ENCODE measurements at regions of chr12 and their contacts with region 1.

Region 1: DNA sequence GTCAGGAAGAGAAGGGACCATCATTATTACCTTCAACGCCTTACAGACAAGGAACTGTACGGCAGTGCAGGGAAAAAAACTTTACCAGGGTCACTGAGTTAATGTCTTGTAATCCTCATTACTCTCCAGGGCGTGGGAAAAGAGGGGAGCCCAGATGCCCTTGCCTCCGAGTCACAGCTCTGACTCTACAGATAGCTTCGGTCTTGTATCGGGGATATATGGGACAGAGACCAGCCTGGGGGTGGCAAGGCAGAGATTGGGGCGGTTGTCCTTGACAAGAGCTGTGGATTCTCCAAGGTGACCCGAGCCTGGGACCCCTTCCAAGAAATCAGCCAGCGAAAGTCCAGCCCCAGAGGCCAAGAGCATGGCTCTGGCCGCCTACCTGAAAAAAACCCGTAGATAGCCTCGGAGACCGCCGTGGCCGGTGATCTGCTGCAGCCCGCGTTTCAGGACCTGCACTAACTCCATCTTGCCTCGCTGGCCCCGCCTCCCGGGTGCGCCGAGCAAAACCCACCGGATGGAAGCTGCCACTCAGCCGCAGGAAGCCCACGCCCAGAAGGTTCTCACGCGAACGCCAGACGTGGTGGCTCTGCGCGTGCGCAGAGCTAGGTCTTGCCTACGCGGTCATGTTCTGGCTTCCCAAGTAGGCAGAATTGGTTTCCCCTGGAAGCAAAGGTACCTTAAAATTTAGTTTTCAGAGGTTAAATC is at the start of gene NDUFA12:
- DNase-seq: peak; percentile 96 to 97
- H3K4me3 ChIP-seq: peak within 1 kb of the TSS; percentile 58
- H3K4me3 Mint-ChIP-seq: peak within 1 kb of the TSS; percentile 91
- H3K27ac Mint-ChIP-seq: peak within 1 kb of the TSS; percentile 97
- H3K4me1 ChIP-seq: peaks cover 4% of the 10 kb centered on the region; the same call in 1 of the 2 replicates
- H3K4me1 Mint-ChIP-seq: peaks cover 12% of the 10 kb centered on the region
- H3K27me3 ChIP-seq: no peaks in the 10 kb centered on the region
- H3K27me3 Mint-ChIP-seq: no peaks in the 10 kb centered on the region
- CTCF ChIP-seq: no peak
- total RNA-seq, gene NDUFA12: 122 and 131 TPM in 2 replicates

Region 2: DNA sequence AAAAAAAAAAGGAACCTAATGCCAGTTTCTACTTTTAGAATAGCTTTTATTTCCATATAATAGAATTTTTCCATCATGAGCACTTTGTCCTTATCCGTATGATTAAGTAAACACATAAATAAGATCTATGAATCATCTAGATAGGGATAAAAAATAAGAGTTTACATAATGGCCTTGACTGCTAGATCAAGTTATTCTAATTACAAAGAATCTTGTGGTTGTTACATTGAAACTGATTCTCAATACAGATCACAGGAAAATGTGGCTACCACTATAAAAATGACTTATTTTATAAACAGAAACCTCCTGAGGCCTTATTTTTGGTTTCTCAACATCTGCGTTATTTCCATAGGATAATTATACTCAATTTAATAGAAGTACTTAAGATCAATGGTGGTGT is 34.5 kb after region 1 on chr12:
- CTCF ChIA-PET with region 1: no interaction called
- POLR2A ChIA-PET with region 1: interaction called, 11 read pairs
- intact Hi-C with region 1: no loop called
- DNase-seq: no peak
- H3K4me3 ChIP-seq: no peak overlapping the region
- H3K4me3 Mint-ChIP-seq: no peak overlapping the region
- H3K27ac Mint-ChIP-seq: no peak overlapping the region
- H3K4me1 ChIP-seq: no peaks in the 10 kb centered on the region
- H3K4me1 Mint-ChIP-seq: no peaks in the 10 kb centered on the region
- H3K27me3 ChIP-seq: no peaks in the 10 kb centered on the region
- H3K27me3 Mint-ChIP-seq: no peaks in the 10 kb centered on the region
- CTCF ChIP-seq: no peak

Region 3: GRCh38 chr12:95072900-95073697 is 69.7 kb after region 1 on chr12 and contains the start of gene NR2C1:
- CTCF ChIA-PET with region 1: interaction called, 5 read pairs
- POLR2A ChIA-PET with region 1: interaction called, 14 read pairs
- intact Hi-C with region 1: no loop called
- DNase-seq: peak; percentile 96 to 97
- H3K4me3 ChIP-seq: peak within 1 kb of the TSS; percentile 94
- H3K4me3 Mint-ChIP-seq: peak within 1 kb of the TSS; percentile 91
- H3K27ac Mint-ChIP-seq: peak within 1 kb of the TSS; percentile 94
- H3K4me1 ChIP-seq: peaks cover 5% of the 10 kb centered on the region; the same call in 1 of the 2 replicates
- H3K4me1 Mint-ChIP-seq: peaks cover 6% of the 10 kb centered on the region
- H3K27me3 ChIP-seq: no peaks in the 10 kb centered on the region
- H3K27me3 Mint-ChIP-seq: no peaks in the 10 kb centered on the region
- CTCF ChIP-seq: peak in 1 of 2 experiments; percentile 59
- total RNA-seq, gene NR2C1: 49.7 and 51.1 TPM in 2 replicates

Measured in Caco-2 (cell line).